ENCODE measurements at regions of chr20 and their contacts with region 1.

Region 1: GRCh38 chr20:8305449-8305978 is 173.4 kb downstream of the PLCB1 start:
- DNase-seq: peak; percentile 83
- ATAC-seq: peak; percentile 83
- H3K4me3 Mint-ChIP-seq: no peak overlapping the region
- H3K27ac Mint-ChIP-seq: no peak overlapping the region
- H3K4me1 Mint-ChIP-seq: no peaks in the 10 kb centered on the region
- H3K27me3 Mint-ChIP-seq: peaks cover 2% of the 10 kb centered on the region
- CTCF ChIP-seq: peak; percentile 71

Region 2: DNA sequence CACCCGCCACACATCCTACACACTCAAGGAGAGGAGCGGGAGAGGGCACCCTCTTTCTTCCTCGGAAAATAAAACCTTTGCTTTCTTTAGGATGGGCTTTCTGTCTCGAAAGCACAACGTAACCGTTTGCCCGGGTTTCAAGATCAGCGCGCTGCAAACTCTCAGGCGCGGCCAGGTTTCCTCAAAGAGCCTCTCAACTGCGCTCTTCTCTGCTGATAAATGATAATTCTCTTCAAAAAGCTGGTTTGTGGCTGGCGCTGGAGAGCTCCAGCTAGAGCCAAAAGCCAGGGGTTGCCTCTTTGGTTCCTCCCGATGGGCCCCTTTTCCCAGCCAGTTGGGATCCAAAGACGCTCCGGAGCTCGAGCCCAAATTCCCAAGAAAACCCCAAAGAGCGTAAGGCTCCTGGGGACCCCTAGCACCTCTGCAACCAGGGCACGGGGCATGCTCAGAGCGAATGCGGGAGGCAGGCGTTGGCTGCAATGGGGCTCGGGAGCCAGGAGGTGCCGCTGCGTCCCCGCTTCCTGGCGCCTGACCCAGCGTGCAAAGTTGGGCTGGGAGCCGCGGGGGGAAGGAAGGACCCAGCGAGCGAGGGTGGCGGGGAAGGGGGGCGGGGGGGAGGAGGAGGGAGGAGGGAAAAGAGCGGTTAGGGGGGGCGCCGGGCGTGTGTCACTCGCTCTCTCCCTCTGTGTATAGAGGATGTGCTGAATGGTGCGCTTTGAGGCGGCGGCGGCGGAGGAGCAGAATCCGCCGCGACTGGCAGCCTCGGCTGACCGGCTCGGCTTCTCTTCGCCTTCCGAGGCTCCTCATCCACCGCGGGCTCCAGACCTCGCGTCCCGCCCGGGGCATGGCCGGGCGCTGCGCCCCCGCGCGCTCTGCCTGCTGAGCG is 173.7 kb before region 1 on chr20 and contains the start of gene PLCB1:
- CTCF ChIA-PET with region 1: interaction called, 19 read pairs
- POLR2A ChIA-PET with region 1: no interaction called
- intact Hi-C with region 1: loop called (anchors 2 kb)
- DNase-seq: peak; percentile 86
- ATAC-seq: peak; percentile 93
- H3K4me3 Mint-ChIP-seq: peak within 1 kb of the TSS; percentile 76
- H3K27ac Mint-ChIP-seq: peak within 1 kb of the TSS; percentile 27
- H3K4me1 Mint-ChIP-seq: peaks cover 26% of the 10 kb centered on the region
- H3K27me3 Mint-ChIP-seq: peaks cover 33% of the 10 kb centered on the region
- CTCF ChIP-seq: peak; percentile 73
- total RNA-seq, gene PLCB1: 3.1 to 3.6 TPM